Posterior vena cava (tissue), 2 donors: ENCODE measurements at regions of chr11 and their contacts with region 1.

Region 1: DNA sequence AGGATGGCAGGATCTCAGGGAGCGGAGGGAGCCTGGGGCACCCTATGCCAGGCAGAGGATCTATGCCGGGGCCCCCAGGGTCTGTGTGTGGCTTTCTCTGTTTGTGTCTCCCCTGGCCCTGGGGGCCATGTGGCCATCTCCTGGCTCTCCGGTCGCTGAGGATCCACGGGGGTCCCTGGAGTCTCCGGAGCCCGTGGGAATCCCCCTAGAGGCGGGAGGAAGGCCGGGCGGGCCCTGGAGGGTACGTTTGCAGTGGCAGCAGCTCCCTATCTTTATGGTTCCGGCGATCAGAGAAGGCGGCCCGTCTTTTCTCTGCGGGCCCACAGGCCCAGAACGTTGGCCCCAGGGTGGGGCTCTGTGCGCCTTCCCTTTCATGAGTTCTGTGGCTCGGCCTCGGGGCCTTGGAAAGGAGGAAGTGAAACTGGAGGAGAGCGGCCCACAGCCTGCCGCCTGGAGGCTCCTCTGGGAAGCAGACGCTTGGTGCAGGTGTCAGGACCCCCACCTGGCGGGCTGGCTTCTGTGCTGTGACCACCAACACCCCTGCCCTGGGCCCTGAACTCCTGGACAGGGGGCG is 82.1 kb downstream of the KCNQ1 start:
- DNase-seq: peak; percentile 84

Region 2: DNA sequence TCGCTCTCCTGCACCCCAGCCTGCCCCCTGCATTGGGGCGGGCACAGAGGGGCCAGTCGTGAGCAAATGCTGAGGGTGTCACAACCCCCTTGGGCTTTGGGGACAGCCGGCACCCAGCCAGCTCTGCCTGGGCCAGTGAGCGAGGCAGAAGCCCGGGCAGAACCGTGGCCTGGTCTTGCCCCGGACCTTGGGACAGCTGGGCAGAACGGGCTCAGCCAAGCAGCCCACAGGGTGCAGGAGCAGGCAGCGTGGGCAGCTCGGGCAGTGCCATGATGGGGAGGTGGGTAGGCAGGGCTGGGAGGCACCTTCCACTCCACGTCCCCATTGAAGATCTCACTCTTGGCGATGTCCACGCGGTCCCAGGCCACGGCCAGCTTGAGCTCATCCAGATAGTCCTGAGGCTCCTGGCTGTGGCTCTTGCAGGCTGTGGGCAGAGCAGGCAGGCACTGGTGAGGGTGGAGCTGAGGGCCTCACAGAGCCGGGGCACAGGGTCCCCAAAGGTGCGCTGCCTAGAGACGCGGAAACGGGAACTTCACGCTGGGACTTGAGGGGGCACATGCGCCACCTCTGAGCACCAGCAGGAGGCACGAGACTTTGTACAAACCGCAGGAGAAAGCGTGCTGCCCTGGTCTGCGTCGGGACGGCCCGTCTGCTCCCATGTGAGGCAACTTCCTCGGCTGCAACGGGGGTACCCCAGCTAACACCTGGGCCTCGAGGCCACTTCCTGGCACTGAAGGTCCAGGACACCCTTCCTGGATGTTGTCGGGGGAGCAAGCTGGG is 111.1 kb before region 1 on chr11:
- intact Hi-C with region 1: no loop called
- DNase-seq: no peak

Region 3: GRCh38 chr11:2489083-2489482 is 37.8 kb before region 1 on chr11:
- intact Hi-C with region 1: no loop called
- DNase-seq: peak; percentile 25

Region 4: GRCh38 chr11:2998073-2998850 is 471.4 kb after region 1 on chr11:
- intact Hi-C with region 1: loop called in 1 of 2 experiments (anchors 5 kb)
- DNase-seq: peak; percentile 14